Panc1 (cell line): ENCODE measurements at regions of chr22 and their contacts with region 1.

Region 1: GRCh38 chr22:37917874-37918548 is 11.9 kb downstream of the MICALL1 start:
- DNase-seq: no peak
- ATAC-seq: no peak
- H3K4me3 ChIP-seq: no peak overlapping the region
- H3K27ac ChIP-seq: no peak overlapping the region
- H3K4me1 ChIP-seq: no peaks in the 10 kb centered on the region
- H3K27me3 ChIP-seq: no peaks in the 10 kb centered on the region
- CTCF ChIP-seq: no peak

Region 2: GRCh38 chr22:37898441-37899181 is 19.4 kb before region 1 on chr22:
- CTCF ChIA-PET with region 1: interaction called, 15 read pairs
- POLR2A ChIA-PET with region 1: no interaction called
- in situ Hi-C with region 1: no loop called
- intact Hi-C with region 1: no loop called
- DNase-seq: no peak
- ATAC-seq: no peak
- H3K4me3 ChIP-seq: no peak overlapping the region
- H3K27ac ChIP-seq: no peak overlapping the region
- H3K4me1 ChIP-seq: peaks cover 26% of the 10 kb centered on the region
- H3K27me3 ChIP-seq: no peaks in the 10 kb centered on the region
- CTCF ChIP-seq: no peak